ENCODE measurements at regions of chr15 and their contacts with region 1.

Region 1: DNA sequence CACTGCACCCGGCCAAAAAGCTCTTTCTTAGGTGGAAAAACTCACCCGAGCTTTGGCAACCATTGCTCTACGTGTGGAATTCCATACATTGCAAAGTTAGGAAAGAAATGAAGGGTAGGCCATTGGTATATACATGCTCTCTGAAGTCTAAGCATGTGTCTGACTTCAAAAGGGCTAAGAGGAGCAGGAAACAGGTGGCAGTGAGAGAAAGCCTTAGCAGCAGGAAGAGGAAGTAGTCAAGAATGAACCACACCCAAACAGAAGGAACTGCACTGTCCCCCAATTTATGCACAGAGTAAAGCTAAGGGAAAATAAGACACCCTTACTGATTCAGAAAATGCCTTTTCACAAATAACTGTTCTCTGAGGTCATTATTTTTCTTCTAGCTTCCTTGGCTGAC is 575.5 kb downstream of the NTRK3 start:
- DNase-seq: no peak
- H3K4me3 ChIP-seq: no peak overlapping the region
- CTCF ChIP-seq: no peak
- POLR2A ChIP-seq: no peak

Region 2: DNA sequence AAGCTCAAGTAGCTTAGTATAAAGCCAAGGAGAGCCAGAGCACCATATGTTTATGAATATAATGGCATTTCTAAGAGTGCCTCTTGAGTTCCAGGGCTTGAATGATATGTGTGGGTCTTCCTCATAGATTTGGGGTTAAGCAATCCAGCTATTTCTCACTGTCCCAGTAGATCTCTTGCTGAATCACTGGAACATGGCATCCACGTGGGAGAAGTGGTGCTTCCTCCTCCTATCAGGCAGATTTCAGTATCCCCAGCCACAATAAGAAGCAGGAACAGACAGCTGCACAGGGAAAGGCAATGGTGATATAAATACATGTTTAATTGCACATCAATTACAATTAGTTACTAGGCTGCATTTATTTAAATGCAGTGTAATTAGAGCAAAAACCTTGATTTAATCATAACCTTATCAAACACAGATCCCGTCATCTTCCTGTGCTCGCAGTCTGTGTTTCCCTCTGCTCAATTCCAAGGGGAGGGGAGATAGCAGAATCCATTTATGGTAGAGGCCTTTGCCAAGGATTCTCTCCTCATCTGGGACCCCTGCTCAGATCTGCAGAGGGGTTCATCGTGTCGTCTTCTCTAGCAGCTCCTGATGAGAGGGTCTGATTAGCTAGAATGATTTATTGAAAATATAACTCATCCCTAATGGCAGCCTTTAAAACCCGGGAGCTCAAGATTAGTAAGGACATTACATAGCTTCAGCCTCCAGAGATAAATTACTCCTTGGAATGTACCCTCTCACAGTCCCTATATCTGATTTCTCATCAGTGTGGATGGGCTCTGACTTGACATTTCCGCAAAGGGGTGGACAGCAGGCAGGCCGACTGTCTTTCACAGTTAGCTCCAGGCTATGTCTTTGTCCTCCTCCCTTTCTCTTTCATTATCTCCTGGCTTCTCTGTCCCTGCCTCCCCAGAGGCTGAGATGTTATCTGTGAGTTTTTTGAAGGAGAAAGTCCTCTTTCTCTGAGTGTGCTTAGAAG is 825.5 kb before region 1 on chr15:
- intact Hi-C with region 1: loop called (anchors 10 kb)
- DNase-seq: no peak
- H3K4me3 ChIP-seq: no peak overlapping the region
- CTCF ChIP-seq: no peak
- POLR2A ChIP-seq: no peak

Region 3: GRCh38 chr15:87387766-87388165 is 293.3 kb before region 1 on chr15:
- intact Hi-C with region 1: no loop called
- DNase-seq: no peak
- H3K4me3 ChIP-seq: no peak overlapping the region
- CTCF ChIP-seq: no peak
- POLR2A ChIP-seq: no peak

Region 4: GRCh38 chr15:87570206-87570605 is 110.8 kb before region 1 on chr15:
- intact Hi-C with region 1: no loop called
- DNase-seq: no peak
- H3K4me3 ChIP-seq: no peak overlapping the region
- CTCF ChIP-seq: no peak
- POLR2A ChIP-seq: no peak

Region 5: GRCh38 chr15:87623832-87624231 is 57.2 kb before region 1 on chr15:
- intact Hi-C with region 1: no loop called
- DNase-seq: no peak
- H3K4me3 ChIP-seq: no peak overlapping the region
- CTCF ChIP-seq: no peak
- POLR2A ChIP-seq: no peak

Region 6: DNA sequence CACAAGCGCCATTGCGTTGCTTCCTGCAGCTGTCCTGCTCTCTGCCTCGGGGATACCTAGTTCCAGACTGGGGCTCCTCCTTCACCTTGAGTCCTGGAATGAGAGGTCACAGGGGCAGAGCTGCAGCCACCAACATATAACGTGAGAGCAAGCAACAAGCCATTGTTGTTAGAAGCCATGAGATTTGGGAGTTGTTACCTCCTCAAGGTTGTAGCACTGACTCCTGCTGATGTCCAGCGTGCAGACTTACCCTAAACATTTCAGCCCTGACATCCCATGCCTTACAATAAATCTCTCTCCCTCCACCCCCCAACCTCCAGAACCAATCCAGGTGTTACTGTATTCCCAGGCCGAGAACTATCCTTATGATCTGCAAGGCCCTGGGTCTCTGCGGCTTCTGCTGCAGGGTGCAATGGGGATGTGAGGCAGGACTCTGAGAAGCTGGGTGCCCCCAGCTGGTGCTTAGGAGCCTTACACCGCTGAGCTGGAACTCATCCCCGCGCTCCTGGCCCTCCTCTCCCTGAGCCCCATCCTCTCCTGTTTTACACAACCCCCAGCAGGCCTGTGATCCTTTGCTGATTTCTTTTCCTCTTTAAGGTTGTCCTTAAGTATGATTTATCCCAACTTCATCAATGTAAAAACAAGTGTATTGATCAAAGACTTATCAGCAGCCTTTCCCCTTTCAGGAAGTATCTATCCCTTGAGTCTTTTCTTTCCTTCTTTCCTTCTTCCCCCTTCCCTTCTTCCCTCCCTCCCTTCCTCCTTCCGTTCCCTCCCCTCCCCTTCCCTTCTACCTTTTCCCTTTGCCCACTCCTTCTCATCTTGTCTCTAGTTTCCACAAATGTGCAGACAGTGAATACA is 1323.0 kb after region 1 on chr15:
- intact Hi-C with region 1: no loop called
- DNase-seq: peak in 1 of 2 donors; percentile 72
- H3K4me3 ChIP-seq: no peak overlapping the region
- CTCF ChIP-seq: no peak
- POLR2A ChIP-seq: no peak

Measured in lower leg skin (tissue), 4 donors.